ENCODE measurements at regions of chr11 and their contacts with region 1.

Region 1: DNA sequence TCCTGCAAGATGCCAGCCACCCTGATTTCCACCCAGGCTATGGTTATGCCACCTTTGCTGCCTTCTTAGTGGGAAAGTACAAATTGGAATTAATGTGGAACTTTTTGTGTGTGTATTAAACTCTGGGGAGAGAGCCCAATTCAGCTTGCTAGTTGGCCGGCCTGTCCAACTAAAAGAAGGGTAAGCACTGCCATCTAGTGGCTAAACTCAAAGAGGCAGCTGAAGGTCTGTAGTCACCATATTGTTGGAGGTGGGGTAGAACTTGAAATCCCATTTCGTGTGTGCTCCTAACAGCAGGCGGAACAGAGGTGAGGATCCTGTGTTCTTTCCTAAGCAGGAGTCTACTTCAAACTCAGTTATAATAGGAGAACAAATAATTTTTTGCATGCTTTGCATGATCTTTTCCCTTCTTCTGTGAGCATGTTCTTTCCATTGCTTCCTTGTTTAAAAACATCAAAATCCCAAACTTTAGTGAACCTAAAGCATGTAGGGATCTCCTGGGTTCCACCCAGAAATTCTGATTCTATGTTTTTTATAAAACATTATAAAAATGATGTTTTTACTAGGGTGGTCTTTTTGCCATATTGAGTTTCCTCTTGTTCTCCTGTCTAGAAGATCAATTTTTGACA is 138.8 kb upstream of the SORL1-AS1 start:
- DNase-seq: no peak
- H3K4me3 ChIP-seq: no peak overlapping the region
- CTCF ChIP-seq: peak; percentile 84

Region 2: DNA sequence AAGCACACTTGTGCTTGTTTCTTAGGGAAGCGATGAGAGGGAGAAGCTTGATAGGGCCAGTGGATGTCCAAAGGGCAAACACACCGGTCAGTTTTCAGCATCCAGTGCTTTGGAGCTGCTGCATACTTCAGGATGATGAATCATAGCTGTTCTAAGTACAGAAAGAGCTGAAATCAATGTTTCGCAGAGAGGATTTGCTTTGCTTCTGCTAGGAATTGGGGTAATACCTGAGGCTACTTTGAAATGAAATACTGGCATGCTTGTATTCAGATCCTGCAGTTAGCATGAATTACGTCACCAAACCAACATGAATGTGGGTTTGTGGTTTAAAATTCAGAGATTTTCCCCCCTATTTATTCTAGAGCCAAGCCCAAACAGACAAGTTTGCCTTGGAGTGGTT is 340.7 kb before region 1 on chr11:
- CTCF ChIA-PET with region 1: interaction called, 12 read pairs
- POLR2A ChIA-PET with region 1: no interaction called
- DNase-seq: no peak
- H3K4me3 ChIP-seq: no peak overlapping the region
- CTCF ChIP-seq: no peak

Region 3: GRCh38 chr11:121312483-121312882 is 279.0 kb before region 1 on chr11:
- CTCF ChIA-PET with region 1: interaction called, 55 read pairs
- POLR2A ChIA-PET with region 1: no interaction called
- DNase-seq: no peak
- H3K4me3 ChIP-seq: no peak overlapping the region
- CTCF ChIP-seq: no peak

Region 4: GRCh38 chr11:121318848-121319834 is 272.4 kb before region 1 on chr11:
- CTCF ChIA-PET with region 1: interaction called, 55 read pairs
- POLR2A ChIA-PET with region 1: no interaction called
- DNase-seq: peak; percentile 10
- H3K4me3 ChIP-seq: no peak overlapping the region
- CTCF ChIP-seq: peak; percentile 71